Endothelial cell of umbilical vein (primary cell): ENCODE measurements at regions of chr10 and their contacts with region 1.

Region 1: GRCh38 chr10:48656241-48656913 is 28.3 kb upstream of the WDFY4 start:
- DNase-seq: peak; percentile 90
- H3K4me3 ChIP-seq: peak overlapping the region in 2 of 3 experiments; percentile 42 to 60
- H3K27ac ChIP-seq: peak overlapping the region; percentile 78
- H3K4me1 ChIP-seq: peaks cover 20% of the 10 kb centered on the region
- H3K27me3 ChIP-seq: peaks cover 0 to 4% of the 10 kb centered on the region in 2 experiments
- CTCF ChIP-seq: peak; percentile 94 to 99
- POLR2A ChIP-seq: no peak

Region 2: DNA sequence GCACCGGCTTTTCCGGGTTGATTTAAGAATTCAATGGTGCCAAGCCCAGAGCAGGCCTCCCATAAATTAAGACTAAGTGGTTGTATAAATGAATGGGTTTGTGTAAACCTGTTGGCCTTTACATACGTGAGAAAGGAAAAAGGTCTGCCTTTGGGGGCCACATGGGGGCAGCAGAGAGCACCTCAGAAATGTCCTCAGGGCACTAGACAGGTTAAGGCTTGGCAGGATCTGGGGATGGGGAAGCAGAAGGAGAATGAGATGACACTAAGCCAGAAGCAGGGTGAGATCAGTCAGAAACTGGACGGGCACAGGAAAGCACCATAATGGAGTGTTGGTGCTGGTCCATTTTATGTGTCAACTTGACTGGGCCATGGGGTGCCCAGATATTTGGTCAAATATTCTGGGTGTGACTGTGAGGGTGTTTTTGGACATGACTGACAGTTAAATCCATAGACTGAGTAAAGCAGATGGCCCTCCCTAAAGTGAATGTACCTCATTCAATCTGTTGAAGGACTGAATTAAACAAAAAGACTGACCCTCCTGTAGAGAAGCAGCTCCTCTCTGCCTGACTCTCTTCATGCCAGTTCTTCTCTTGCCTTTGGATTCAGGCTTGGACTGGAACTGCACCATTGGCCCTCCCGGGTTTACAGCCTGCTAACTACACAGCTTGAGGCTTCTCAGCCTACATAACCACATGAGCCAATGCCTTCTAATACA is 440.7 kb before region 1 on chr10:
- CTCF ChIA-PET with region 1: interaction called, 7 read pairs
- POLR2A ChIA-PET with region 1: no interaction called
- dilution Hi-C with region 1: no loop called
- intact Hi-C with region 1: loop called (anchors 1 kb)
- DNase-seq: peak; percentile 57
- H3K4me3 ChIP-seq: no peak overlapping the region
- H3K27ac ChIP-seq: no peak overlapping the region
- H3K4me1 ChIP-seq: no peaks in the 10 kb centered on the region
- H3K27me3 ChIP-seq: peaks cover 3% of the 10 kb centered on the region in 2 experiments
- CTCF ChIP-seq: peak; percentile 81 to 89
- POLR2A ChIP-seq: no peak

Region 3: GRCh38 chr10:48439031-48439430 is 217.3 kb before region 1 on chr10:
- CTCF ChIA-PET with region 1: interaction called, 67 read pairs
- POLR2A ChIA-PET with region 1: no interaction called
- dilution Hi-C with region 1: no loop called
- intact Hi-C with region 1: loop called (anchors 1 kb)
- DNase-seq: no peak
- H3K4me3 ChIP-seq: no peak overlapping the region
- H3K27ac ChIP-seq: no peak overlapping the region
- H3K4me1 ChIP-seq: no peaks in the 10 kb centered on the region
- H3K27me3 ChIP-seq: no peaks in the 10 kb centered on the region
- CTCF ChIP-seq: no peak
- POLR2A ChIP-seq: no peak

Region 4: GRCh38 chr10:48533951-48534720 is 122.2 kb before region 1 on chr10:
- CTCF ChIA-PET with region 1: interaction called, 28 read pairs
- POLR2A ChIA-PET with region 1: no interaction called
- dilution Hi-C with region 1: no loop called
- intact Hi-C with region 1: no loop called
- DNase-seq: no peak
- H3K4me3 ChIP-seq: no peak overlapping the region
- H3K27ac ChIP-seq: no peak overlapping the region
- H3K4me1 ChIP-seq: no peaks in the 10 kb centered on the region
- H3K27me3 ChIP-seq: no peaks in the 10 kb centered on the region
- CTCF ChIP-seq: no peak
- POLR2A ChIP-seq: no peak

Region 5: DNA sequence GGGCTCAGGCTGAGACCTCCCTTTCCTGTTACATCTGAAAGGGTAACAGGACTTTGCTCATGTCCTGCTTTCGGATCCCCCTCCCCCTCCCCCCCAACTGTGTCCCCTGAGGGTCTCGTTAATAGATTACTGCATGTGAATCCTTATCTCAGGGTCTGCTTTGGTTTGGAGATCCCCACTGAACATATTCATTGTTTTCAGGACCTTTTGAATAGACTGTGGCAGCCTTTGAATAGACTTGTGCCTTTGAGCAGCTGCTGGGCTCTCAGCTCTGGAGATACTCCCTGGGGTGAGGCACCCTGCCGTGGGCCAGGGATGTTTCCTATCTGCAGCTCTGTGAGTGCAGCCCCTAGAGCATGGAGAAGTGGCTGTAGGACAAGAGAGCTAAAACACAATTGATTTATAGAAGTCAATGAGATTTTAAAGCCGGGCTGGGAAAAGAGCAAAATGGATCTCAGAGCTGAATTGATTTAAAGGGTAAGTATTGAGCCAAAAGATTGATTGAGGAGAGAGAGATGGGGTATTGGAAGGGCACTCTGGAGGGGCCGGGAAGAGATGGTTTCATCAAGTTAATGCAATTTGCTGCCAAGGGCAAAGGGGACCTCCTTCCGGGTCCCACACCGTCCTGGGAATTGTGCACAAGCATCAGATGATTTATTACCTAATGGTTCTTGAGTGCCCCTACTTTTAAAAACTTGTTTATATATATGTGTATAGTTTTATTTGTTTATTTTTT is 61.4 kb before region 1 on chr10:
- CTCF ChIA-PET with region 1: interaction called, 58 read pairs
- POLR2A ChIA-PET with region 1: no interaction called
- dilution Hi-C with region 1: no loop called
- intact Hi-C with region 1: no loop called
- DNase-seq: no peak
- H3K4me3 ChIP-seq: no peak overlapping the region
- H3K27ac ChIP-seq: no peak overlapping the region
- H3K4me1 ChIP-seq: peaks cover 5% of the 10 kb centered on the region
- H3K27me3 ChIP-seq: no peaks in the 10 kb centered on the region
- CTCF ChIP-seq: no peak
- POLR2A ChIP-seq: no peak

Region 6: DNA sequence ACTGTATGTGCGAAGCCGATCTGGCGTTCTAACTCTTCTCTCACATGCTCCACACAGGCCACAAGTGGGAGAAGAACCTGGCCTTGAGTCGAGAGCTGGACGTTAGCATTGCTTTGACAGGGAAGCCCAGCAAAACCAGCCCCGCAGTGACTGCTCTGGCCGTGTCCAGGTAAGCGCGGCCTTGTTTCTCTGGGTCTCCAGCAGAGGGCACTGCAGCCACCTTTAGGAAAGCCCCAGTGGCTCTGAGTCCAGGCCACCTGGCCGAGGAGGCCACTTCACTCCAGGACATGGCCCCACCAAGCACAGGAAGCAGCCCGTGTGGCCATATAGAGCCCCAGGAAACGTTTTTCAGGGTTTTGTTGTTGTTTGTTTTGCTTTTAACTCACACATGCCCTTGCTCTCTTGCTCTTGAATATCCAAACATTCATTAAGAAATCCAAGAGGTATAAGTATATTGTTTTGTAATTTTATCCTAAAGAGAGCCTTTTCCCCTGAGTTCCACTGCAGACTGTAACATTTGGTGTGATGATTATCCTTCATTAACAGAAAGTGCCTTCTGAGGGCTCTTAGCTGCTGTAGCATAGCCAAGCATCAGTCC is 325.0 kb after region 1 on chr10:
- CTCF ChIA-PET with region 1: no interaction called
- POLR2A ChIA-PET with region 1: no interaction called
- dilution Hi-C with region 1: no loop called
- intact Hi-C with region 1: loop called (anchors 2 kb)
- DNase-seq: peak; percentile 27
- H3K4me3 ChIP-seq: no peak overlapping the region
- H3K27ac ChIP-seq: no peak overlapping the region
- H3K4me1 ChIP-seq: no peaks in the 10 kb centered on the region
- H3K27me3 ChIP-seq: no peaks in the 10 kb centered on the region
- CTCF ChIP-seq: peak; percentile 72 to 88
- POLR2A ChIP-seq: no peak